ENCODE measurements at regions of chr19 and their contacts with region 1.

Region 1: DNA sequence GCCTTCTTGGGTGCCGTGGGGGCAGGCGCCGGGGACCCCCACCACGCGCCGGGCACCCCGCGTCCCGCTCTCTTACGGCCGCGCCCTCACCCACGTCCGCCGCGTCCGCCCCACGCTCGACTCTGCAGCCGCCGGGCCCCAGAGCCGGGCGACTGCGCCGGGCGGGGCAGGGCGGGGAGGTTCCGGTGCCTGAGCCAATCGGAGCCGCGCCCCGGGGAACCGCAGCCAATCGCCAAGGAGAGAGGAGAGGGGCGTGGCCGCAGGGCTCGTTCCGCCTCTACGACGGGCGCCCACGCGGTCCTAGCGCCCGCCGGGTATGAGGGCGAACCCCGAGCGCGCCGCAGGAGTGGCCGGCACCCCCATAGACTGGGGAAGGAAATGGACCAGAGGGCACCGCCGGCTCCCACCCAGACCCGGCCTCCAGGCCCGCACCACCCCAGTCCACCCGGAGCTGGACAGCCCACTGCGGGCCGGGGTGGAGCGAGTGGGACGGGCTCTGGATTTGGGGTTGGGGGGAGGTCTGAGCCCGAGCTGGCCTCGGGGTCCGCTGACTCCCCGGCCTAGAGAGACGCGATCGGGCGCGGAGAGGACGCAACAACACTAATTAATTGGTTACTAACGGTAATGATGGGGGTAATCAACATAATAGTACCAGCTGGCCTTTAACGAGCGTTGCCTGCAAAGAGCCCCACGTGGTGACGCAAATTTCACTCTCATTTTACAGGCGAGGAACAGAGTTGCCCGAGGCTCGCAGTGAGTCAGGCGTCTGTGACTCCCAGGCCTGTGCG is at the start of gene MFSD12:
- DNase-seq: peak; percentile 88 to 97 (median 96)
- ATAC-seq: peak; percentile 85
- H3K4me3 ChIP-seq: peak within 1 kb of the TSS; percentile 68 to 95
- H3K4me3 Mint-ChIP-seq: peak within 1 kb of the TSS; percentile 96
- H3K27ac ChIP-seq: peak within 1 kb of the TSS; percentile 56 to 64
- H3K27ac Mint-ChIP-seq: peak within 1 kb of the TSS; percentile 95
- H3K4me1 ChIP-seq: peaks cover 46% of the 10 kb centered on the region
- H3K4me1 Mint-ChIP-seq: peaks cover 36% of the 10 kb centered on the region
- H3K27me3 ChIP-seq: no peaks in the 10 kb centered on the region
- H3K27me3 Mint-ChIP-seq: no peaks in the 10 kb centered on the region
- CTCF ChIP-seq: no peak
- total RNA-seq, gene MFSD12: 42.3 to 42.7 TPM

Region 2: GRCh38 chr19:3505598-3506383 is 51.9 kb before region 1 on chr19 and contains the start of gene FZR1:
- CTCF ChIA-PET with region 1: no interaction called
- POLR2A ChIA-PET with region 1: interaction called, 6 read pairs
- intact Hi-C with region 1: loop called (anchors 1 kb)
- DNase-seq: peak; percentile 99 to 100 (median 100)
- ATAC-seq: peak; percentile 85
- H3K4me3 ChIP-seq: peak within 1 kb of the TSS; percentile 76 to 83
- H3K4me3 Mint-ChIP-seq: peak within 1 kb of the TSS; percentile 85
- H3K27ac ChIP-seq: peak within 1 kb of the TSS; percentile 97
- H3K27ac Mint-ChIP-seq: peak within 1 kb of the TSS; percentile 97
- H3K4me1 ChIP-seq: peaks cover 36% of the 10 kb centered on the region
- H3K4me1 Mint-ChIP-seq: peaks cover 48% of the 10 kb centered on the region
- H3K27me3 ChIP-seq: no peaks in the 10 kb centered on the region
- H3K27me3 Mint-ChIP-seq: no peaks in the 10 kb centered on the region
- CTCF ChIP-seq: no peak
- total RNA-seq, gene FZR1: 130 to 142 TPM

Region 3: GRCh38 chr19:3544742-3545668 is 12.7 kb before region 1 on chr19:
- CTCF ChIA-PET with region 1: interaction called, 43 read pairs
- POLR2A ChIA-PET with region 1: interaction called, 9 read pairs
- intact Hi-C with region 1: loop called (anchors 1 kb)
- DNase-seq: peak; percentile 62 to 89 (median 76)
- ATAC-seq: peak; percentile 86
- H3K4me3 ChIP-seq: no peak overlapping the region
- H3K4me3 Mint-ChIP-seq: no peak overlapping the region
- H3K27ac ChIP-seq: peak overlapping the region in 1 of 2 experiments; percentile 39
- H3K27ac Mint-ChIP-seq: no peak overlapping the region
- H3K4me1 ChIP-seq: no peaks in the 10 kb centered on the region
- H3K4me1 Mint-ChIP-seq: peaks cover 10% of the 10 kb centered on the region
- H3K27me3 ChIP-seq: no peaks in the 10 kb centered on the region
- H3K27me3 Mint-ChIP-seq: no peaks in the 10 kb centered on the region
- CTCF ChIP-seq: peak; percentile 85

Region 4: GRCh38 chr19:3572132-3572854 is 14.6 kb after region 1 on chr19:
- CTCF ChIA-PET with region 1: interaction called, 3 read pairs
- POLR2A ChIA-PET with region 1: interaction called, 3 read pairs
- intact Hi-C with region 1: loop called (anchors 1 kb)
- DNase-seq: peak; percentile 98 to 100 (median 99)
- ATAC-seq: peak; percentile 95
- H3K4me3 ChIP-seq: peak overlapping the region; percentile 66 to 68
- H3K4me3 Mint-ChIP-seq: peak overlapping the region; percentile 77
- H3K27ac ChIP-seq: peak overlapping the region; percentile 60 to 65
- H3K27ac Mint-ChIP-seq: no peak overlapping the region
- H3K4me1 ChIP-seq: peaks cover 15% of the 10 kb centered on the region
- H3K4me1 Mint-ChIP-seq: peaks cover 18% of the 10 kb centered on the region
- H3K27me3 ChIP-seq: no peaks in the 10 kb centered on the region
- H3K27me3 Mint-ChIP-seq: no peaks in the 10 kb centered on the region
- CTCF ChIP-seq: no peak

Region 5: GRCh38 chr19:3586124-3586626 is 28.5 kb after region 1 on chr19:
- CTCF ChIA-PET with region 1: interaction called, 15 read pairs
- POLR2A ChIA-PET with region 1: interaction called, 4 read pairs
- intact Hi-C with region 1: no loop called
- DNase-seq: peak in 8 of 9 experiments; percentile 31 to 79 (median 56)
- ATAC-seq: peak; percentile 63
- H3K4me3 ChIP-seq: peak overlapping the region; percentile 45 to 51
- H3K4me3 Mint-ChIP-seq: peak overlapping the region; percentile 53
- H3K27ac ChIP-seq: no peak overlapping the region
- H3K27ac Mint-ChIP-seq: no peak overlapping the region
- H3K4me1 ChIP-seq: no peaks in the 10 kb centered on the region
- H3K4me1 Mint-ChIP-seq: no peaks in the 10 kb centered on the region
- H3K27me3 ChIP-seq: no peaks in the 10 kb centered on the region
- H3K27me3 Mint-ChIP-seq: no peaks in the 10 kb centered on the region
- CTCF ChIP-seq: peak; percentile 65

Region 6: GRCh38 chr19:3618144-3618810 is 60.6 kb after region 1 on chr19:
- CTCF ChIA-PET with region 1: no interaction called
- POLR2A ChIA-PET with region 1: interaction called, 3 read pairs
- intact Hi-C with region 1: loop called in 1 of 2 experiments (anchors 1 kb)
- DNase-seq: peak in 8 of 9 experiments; percentile 31 to 79 (median 56)
- ATAC-seq: peak; percentile 68
- H3K4me3 ChIP-seq: no peak overlapping the region
- H3K4me3 Mint-ChIP-seq: no peak overlapping the region
- H3K27ac ChIP-seq: no peak overlapping the region
- H3K27ac Mint-ChIP-seq: no peak overlapping the region
- H3K4me1 ChIP-seq: peaks cover 13% of the 10 kb centered on the region
- H3K4me1 Mint-ChIP-seq: peaks cover 10% of the 10 kb centered on the region
- H3K27me3 ChIP-seq: no peaks in the 10 kb centered on the region
- H3K27me3 Mint-ChIP-seq: no peaks in the 10 kb centered on the region
- CTCF ChIP-seq: peak; percentile 69

Region 7: GRCh38 chr19:3626473-3627350 is 69.1 kb after region 1 on chr19 and contains the start of gene CACTIN:
- CTCF ChIA-PET with region 1: interaction called, 4 read pairs
- POLR2A ChIA-PET with region 1: no interaction called
- intact Hi-C with region 1: loop called (anchors 1 kb)
- DNase-seq: peak; percentile 97 to 99 (median 99)
- ATAC-seq: peak; percentile 99
- H3K4me3 ChIP-seq: peak within 1 kb of the TSS; percentile 77 to 80
- H3K4me3 Mint-ChIP-seq: peak within 1 kb of the TSS; percentile 85
- H3K27ac ChIP-seq: peak within 1 kb of the TSS; percentile 74 to 99
- H3K27ac Mint-ChIP-seq: peak within 1 kb of the TSS; percentile 99
- H3K4me1 ChIP-seq: peaks cover 20% of the 10 kb centered on the region
- H3K4me1 Mint-ChIP-seq: peaks cover 26% of the 10 kb centered on the region
- H3K27me3 ChIP-seq: no peaks in the 10 kb centered on the region
- H3K27me3 Mint-ChIP-seq: no peaks in the 10 kb centered on the region
- CTCF ChIP-seq: no peak
- total RNA-seq, gene CACTIN: 32.5 to 33.0 TPM